GM13977 (cell line): ENCODE measurements at regions of chr5 and their contacts with region 1.

Region 1: DNA sequence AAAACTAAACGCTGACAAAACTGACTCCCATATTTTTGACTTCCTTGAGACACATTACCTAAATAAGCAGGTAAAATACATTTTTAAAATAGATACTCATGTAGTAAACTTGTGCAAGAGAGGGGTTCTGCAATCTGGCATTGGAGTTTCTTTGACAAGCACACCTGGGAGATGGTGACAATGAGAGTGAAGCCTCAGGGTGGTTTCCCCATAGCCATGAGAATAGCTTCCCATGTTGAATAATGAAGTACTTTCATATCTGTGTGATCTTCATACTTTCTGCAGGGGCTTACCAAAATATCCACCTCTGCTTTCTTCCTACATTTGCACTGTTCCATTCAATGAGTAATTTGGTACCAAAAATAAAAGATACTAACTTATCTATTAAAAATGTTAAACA is 44.7 kb upstream of the VCAN start:
- DNase-seq: no peak
- CTCF ChIP-seq: no peak

Region 2: GRCh38 chr5:82641331-82642003 is 785.4 kb before region 1 on chr5:
- in situ Hi-C with region 1: loop called (anchors 10 kb)
- DNase-seq: peak; percentile 65
- CTCF ChIP-seq: peak; percentile 71